ENCODE measurements at regions of chr11 and their contacts with region 1.

Region 1: GRCh38 chr11:93529707-93530467 is 13.3 kb downstream of the SMCO4 start:
- DNase-seq: no peak
- ATAC-seq: no peak
- H3K4me3 ChIP-seq: peak overlapping the region in 1 of 4 donors; percentile 24
- H3K27ac ChIP-seq: peak overlapping the region; percentile 85 to 98 (median 90)
- H3K4me1 ChIP-seq: peaks cover 70 to 71% of the 10 kb centered on the region in 2 donors
- H3K27me3 ChIP-seq: no peaks in the 10 kb centered on the region
- CTCF ChIP-seq: no peak
- POLR2A ChIP-seq: no peak

Region 2: DNA sequence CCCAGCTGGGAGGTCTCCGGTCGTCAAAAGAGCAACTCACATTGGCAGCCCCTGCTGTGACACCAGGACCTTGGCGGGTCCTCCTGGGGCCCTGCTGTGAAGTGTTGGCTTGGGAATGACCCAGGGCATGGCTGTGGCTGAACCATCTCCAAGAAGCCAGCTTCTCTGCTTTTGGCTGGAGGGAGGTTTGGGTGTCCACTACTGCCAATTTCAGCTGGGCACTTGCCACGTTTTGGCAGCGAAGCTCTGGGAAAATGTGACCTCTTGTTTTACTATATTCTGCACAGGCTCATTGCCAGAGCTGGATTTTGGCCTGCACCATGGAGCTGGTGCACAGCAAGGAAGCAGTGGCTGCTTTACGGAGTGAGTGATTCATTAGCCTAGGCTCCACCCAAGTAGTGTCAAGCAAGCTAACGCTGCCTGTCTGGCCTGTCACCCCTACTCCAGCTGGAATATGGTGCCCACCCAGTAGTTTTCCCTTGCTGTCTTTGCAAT is 37.6 kb after region 1 on chr11:
- in situ Hi-C with region 1: no loop called
- intact Hi-C with region 1: loop called (anchors 5 kb)
- DNase-seq: peak; percentile 59 to 76
- ATAC-seq: peak; percentile 91
- H3K4me3 ChIP-seq: no peak overlapping the region
- H3K27ac ChIP-seq: peak overlapping the region; percentile 49 to 72 (median 64)
- H3K4me1 ChIP-seq: peaks cover 33 to 42% of the 10 kb centered on the region in 2 donors
- H3K27me3 ChIP-seq: no peaks in the 10 kb centered on the region
- CTCF ChIP-seq: no peak
- POLR2A ChIP-seq: no peak

Measured in gastrocnemius medialis (tissue), 4 donors.